Common myeloid progenitor, CD34-positive (primary cell): ENCODE measurements at regions of chr6 and their contacts with region 1.

Region 1: GRCh38 chr6:31378062-31378720 is 21.2 kb upstream of the HLA-B start:
- DNase-seq: no peak
- H3K4me3 ChIP-seq: no peak overlapping the region
- H3K27ac ChIP-seq: no peak overlapping the region
- H3K4me1 ChIP-seq: no peaks in the 10 kb centered on the region
- H3K27me3 ChIP-seq: peaks cover 0 to 2% (median 0%) of the 10 kb centered on the region in 5 experiments

Region 2: DNA sequence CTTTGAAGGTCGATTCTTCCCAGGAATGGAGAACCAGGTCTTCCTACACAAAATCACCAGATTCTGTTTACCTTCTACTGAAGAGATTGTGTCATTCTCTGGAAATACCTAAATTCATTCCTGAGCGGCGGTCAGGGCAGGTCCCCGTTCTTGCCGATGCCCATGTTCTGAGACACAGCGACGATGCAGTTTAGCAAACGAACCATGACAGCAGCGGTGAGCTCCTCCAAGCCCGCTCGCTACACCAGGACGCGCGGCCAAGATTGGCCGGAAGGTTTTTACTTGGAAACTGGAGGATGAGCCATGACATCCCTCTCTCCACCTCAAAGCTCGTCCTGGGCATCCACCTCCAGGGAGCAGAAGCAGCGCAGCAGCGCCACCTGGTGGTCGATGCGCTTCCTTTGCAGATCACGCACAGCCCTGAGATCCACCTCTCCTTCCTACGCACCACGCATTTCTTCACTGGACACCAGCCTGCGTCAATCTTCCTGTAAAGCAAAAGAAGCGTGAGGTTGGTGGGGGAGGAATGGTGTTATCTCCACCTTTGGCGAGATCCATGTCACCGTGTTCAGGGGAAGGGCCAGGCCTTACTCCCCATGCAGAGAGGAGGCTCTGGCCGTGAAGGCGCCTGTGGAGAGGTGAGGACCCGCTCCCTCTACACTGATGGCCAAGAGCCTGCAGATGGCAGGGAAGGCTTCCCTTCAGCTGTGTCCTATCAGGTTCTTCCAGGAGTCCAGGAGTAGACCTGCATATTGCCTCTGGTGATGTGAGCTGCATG is 11.3 kb before region 1 on chr6:
- CTCF ChIA-PET with region 1: interaction called, 26 read pairs
- POLR2A ChIA-PET with region 1: no interaction called
- DNase-seq: peak; percentile 86 to 92 (median 88)
- H3K4me3 ChIP-seq: peak overlapping the region in 6 of 7 experiments; percentile 3 to 85 (median 60)
- H3K27ac ChIP-seq: no peak overlapping the region
- H3K4me1 ChIP-seq: peaks cover 0 to 8% (median 7%) of the 10 kb centered on the region in 4 experiments
- H3K27me3 ChIP-seq: peaks cover 0 to 5% (median 3%) of the 10 kb centered on the region in 5 experiments